ENCODE measurements at regions of chr12 and their contacts with region 1.

Region 1: DNA sequence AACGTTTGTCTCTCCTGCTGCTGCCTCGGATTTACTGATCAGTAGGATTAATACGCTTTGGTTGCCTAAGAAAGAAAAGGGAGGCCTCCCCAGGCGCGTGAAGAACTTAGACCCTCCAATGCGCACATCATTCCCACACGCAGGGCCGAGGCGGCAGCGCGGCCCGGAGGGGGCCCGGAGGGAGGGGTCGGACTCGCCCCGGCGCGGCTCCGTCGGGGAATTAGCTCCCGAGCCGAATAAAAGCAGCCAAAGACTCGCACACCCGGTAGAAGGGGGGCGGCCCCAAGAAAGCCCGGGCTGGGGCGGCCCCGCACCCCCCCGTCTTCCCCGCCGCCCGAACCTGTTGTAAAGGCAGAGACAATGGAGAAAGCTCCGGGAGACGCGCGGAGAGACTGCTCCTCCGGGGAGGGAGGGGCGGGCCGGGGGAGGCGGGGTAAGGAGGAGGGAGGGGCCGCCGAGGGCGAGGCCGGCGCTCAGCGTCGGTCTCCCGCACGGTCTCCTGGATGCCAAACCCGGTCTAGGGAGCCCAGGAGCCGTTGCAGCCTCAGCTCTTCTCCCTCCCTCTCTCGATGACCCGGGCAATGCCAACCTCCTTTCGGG is at the start of gene NELL2:
- DNase-seq: peak; percentile 46 to 77 (median 50)
- H3K4me3 ChIP-seq: peak within 1 kb of the TSS; percentile 67 to 74
- H3K4me3 Mint-ChIP-seq: peak within 1 kb of the TSS; percentile 90 to 99 (median 98)
- H3K27ac ChIP-seq: peak within 1 kb of the TSS; percentile 42
- H3K27ac Mint-ChIP-seq: peak within 1 kb of the TSS; percentile 78 to 94 (median 90)
- H3K4me1 ChIP-seq: peaks cover 35% of the 10 kb centered on the region
- H3K4me1 Mint-ChIP-seq: peaks cover 16 to 47% (median 32%) of the 10 kb centered on the region in 4 donors
- H3K27me3 ChIP-seq: peaks cover 6% of the 10 kb centered on the region
- H3K27me3 Mint-ChIP-seq: peaks cover 9 to 19% of the 10 kb centered on the region in 2 donors
- total RNA-seq, gene NELL2: 233 to 257 TPM

Region 2: DNA sequence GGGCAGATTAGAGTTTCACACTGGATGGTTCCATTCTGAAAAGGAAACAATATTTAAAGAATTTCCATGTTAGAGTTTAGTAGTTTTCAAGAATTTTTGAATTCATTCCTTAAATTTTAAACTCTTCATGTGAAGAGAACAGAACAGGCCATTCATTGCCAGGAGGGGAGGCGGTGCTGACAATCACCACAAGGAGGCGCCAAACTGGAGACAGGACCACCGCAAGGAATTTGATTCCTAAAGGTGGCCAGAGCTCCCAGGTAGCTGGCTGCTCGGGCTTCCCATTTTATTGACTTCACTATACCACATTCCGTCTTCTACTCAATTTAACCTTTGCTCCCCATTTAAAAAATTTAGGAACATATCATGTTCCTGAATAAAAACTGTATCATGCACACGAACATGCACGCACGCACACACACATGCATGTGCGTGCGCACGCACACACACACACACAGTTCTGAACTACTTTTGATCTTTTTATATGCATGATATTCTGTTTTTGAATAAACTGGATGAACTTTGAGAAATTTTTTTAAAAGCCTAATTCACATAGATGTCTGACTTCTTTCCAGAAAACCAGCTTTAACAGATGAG is 101.1 kb before region 1 on chr12:
- CTCF ChIA-PET with region 1: interaction called, 93 read pairs
- POLR2A ChIA-PET with region 1: interaction called, 5 read pairs
- intact Hi-C with region 1: loop called (anchors 1 kb)
- DNase-seq: peak; percentile 44 to 54 (median 44)
- H3K4me3 ChIP-seq: no peak overlapping the region
- H3K4me3 Mint-ChIP-seq: no peak overlapping the region
- H3K27ac ChIP-seq: no peak overlapping the region
- H3K27ac Mint-ChIP-seq: peak overlapping the region in 2 of 7 donors; percentile 20 to 74
- H3K4me1 ChIP-seq: no peaks in the 10 kb centered on the region
- H3K4me1 Mint-ChIP-seq: peaks cover 0 to 4% (median 2%) of the 10 kb centered on the region in 4 donors
- H3K27me3 ChIP-seq: no peaks in the 10 kb centered on the region
- H3K27me3 Mint-ChIP-seq: no peaks in the 10 kb centered on the region

Region 3: GRCh38 chr12:44827832-44828438 is 48.1 kb before region 1 on chr12:
- CTCF ChIA-PET with region 1: interaction called, 31 read pairs
- POLR2A ChIA-PET with region 1: interaction called, 35 read pairs
- intact Hi-C with region 1: loop called (anchors 5 kb)
- DNase-seq: peak in 4 of 5 donors; percentile 65 to 80 (median 72)
- H3K4me3 ChIP-seq: peak overlapping the region; percentile 5 to 15
- H3K4me3 Mint-ChIP-seq: peak overlapping the region; percentile 64 to 85 (median 80)
- H3K27ac ChIP-seq: peak overlapping the region; percentile 44
- H3K27ac Mint-ChIP-seq: peak overlapping the region; percentile 81 to 96 (median 92)
- H3K4me1 ChIP-seq: peaks cover 55% of the 10 kb centered on the region
- H3K4me1 Mint-ChIP-seq: peaks cover 27 to 61% (median 46%) of the 10 kb centered on the region in 4 donors
- H3K27me3 ChIP-seq: no peaks in the 10 kb centered on the region
- H3K27me3 Mint-ChIP-seq: no peaks in the 10 kb centered on the region

Region 4: GRCh38 chr12:44863867-44864266 is 12.2 kb before region 1 on chr12:
- CTCF ChIA-PET with region 1: interaction called, 17 read pairs
- POLR2A ChIA-PET with region 1: interaction called, 7 read pairs
- intact Hi-C with region 1: no loop called
- DNase-seq: peak in 4 of 5 donors; percentile 58 to 68 (median 66)
- H3K4me3 ChIP-seq: no peak overlapping the region
- H3K4me3 Mint-ChIP-seq: peak overlapping the region in 7 of 8 donors; percentile 0 to 71 (median 52)
- H3K27ac ChIP-seq: no peak overlapping the region
- H3K27ac Mint-ChIP-seq: peak overlapping the region in 6 of 7 donors; percentile 7 to 84 (median 61)
- H3K4me1 ChIP-seq: peaks cover 40% of the 10 kb centered on the region
- H3K4me1 Mint-ChIP-seq: peaks cover 16 to 68% (median 33%) of the 10 kb centered on the region in 4 donors
- H3K27me3 ChIP-seq: no peaks in the 10 kb centered on the region
- H3K27me3 Mint-ChIP-seq: no peaks in the 10 kb centered on the region

Region 5: GRCh38 chr12:44930972-44931600 is 55.0 kb after region 1 on chr12:
- CTCF ChIA-PET with region 1: interaction called, 4 read pairs
- POLR2A ChIA-PET with region 1: no interaction called
- intact Hi-C with region 1: loop called (anchors 2 kb)
- DNase-seq: peak in 4 of 5 donors; percentile 61 to 68 (median 68)
- H3K4me3 ChIP-seq: no peak overlapping the region
- H3K4me3 Mint-ChIP-seq: no peak overlapping the region
- H3K27ac ChIP-seq: no peak overlapping the region
- H3K27ac Mint-ChIP-seq: no peak overlapping the region
- H3K4me1 ChIP-seq: no peaks in the 10 kb centered on the region
- H3K4me1 Mint-ChIP-seq: peaks cover 0 to 2% (median under 1%) of the 10 kb centered on the region in 4 donors
- H3K27me3 ChIP-seq: no peaks in the 10 kb centered on the region
- H3K27me3 Mint-ChIP-seq: no peaks in the 10 kb centered on the region

Region 6: DNA sequence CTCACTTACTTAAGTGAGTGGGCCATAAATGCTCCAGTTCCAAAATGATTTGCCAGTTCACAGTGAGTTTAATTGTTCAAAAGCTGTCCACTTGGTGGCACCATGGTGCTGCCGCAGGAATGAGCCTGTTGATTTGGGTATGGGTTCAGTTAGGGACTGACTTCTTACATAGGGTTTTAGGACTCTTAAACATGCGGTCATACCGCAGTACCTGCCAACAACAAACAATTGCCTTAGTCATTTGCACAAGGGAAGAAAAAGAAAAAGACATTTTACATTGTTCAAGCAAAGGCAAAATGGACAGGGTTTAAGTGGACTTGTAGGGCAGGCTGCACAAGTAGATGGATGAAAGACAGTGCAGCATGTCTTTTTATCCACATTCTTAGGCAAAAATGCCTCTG is 254.8 kb after region 1 on chr12:
- CTCF ChIA-PET with region 1: no interaction called
- POLR2A ChIA-PET with region 1: no interaction called
- intact Hi-C with region 1: no loop called
- DNase-seq: peak in 4 of 5 donors; percentile 8 to 25 (median 14)
- H3K4me3 ChIP-seq: no peak overlapping the region
- H3K4me3 Mint-ChIP-seq: no peak overlapping the region
- H3K27ac ChIP-seq: no peak overlapping the region
- H3K27ac Mint-ChIP-seq: no peak overlapping the region
- H3K4me1 ChIP-seq: no peaks in the 10 kb centered on the region
- H3K4me1 Mint-ChIP-seq: no peaks in the 10 kb centered on the region
- H3K27me3 ChIP-seq: no peaks in the 10 kb centered on the region
- H3K27me3 Mint-ChIP-seq: peaks cover 1 to 10% of the 10 kb centered on the region in 2 donors